Endothelial cell of umbilical vein (primary cell): ENCODE measurements at regions of chr9 and their contacts with region 1.

Region 1: DNA sequence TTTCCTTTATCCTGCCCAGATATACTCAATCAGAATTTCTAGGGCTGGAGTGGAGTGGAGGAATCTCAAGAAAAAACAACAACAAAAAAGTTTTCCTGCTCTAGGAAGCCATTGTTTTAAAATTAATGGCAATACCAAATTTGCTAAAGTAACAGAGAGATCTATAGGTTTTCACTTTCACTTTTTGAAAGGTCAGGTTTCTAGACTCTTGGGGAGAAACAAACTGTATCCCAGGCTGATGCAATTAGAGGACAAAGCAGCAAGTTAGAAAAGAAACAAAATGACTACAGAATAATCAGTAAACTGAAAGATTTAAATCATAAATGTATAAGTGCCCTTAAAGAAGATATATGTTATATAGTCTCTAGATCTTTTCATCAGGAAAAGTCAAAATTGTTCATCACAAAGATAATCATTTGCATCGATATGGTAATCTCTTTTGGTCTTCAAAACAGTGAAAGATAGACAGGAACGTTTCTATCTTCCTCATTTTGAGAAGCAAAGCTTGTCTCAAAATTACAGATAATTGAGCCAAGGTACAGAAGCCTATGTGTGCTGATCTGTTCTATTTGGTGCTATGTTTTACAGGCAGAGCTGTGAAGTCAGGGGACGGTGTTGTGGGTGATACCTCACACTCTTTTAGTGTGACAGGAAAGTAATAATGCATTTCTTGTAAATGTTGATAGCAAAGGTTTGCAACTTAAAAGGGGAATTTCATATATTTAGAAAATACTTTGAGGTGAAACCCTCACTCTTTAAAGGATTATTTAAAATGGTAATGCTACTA is 1746.6 kb upstream of the C9orf72 start:
- DNase-seq: no peak
- H3K4me3 ChIP-seq: no peak overlapping the region
- H3K27ac ChIP-seq: no peak overlapping the region
- H3K4me1 ChIP-seq: no peaks in the 10 kb centered on the region
- H3K27me3 ChIP-seq: no peaks in the 10 kb centered on the region
- CTCF ChIP-seq: no peak
- POLR2A ChIP-seq: no peak

Region 2: GRCh38 chr9:28503573-28503972 is 816.3 kb before region 1 on chr9:
- CTCF ChIA-PET with region 1: no interaction called
- POLR2A ChIA-PET with region 1: no interaction called
- dilution Hi-C with region 1: no loop called
- intact Hi-C with region 1: loop called (anchors 10 kb)
- DNase-seq: no peak
- H3K4me3 ChIP-seq: no peak overlapping the region
- H3K27ac ChIP-seq: no peak overlapping the region
- H3K4me1 ChIP-seq: no peaks in the 10 kb centered on the region
- H3K27me3 ChIP-seq: no peaks in the 10 kb centered on the region
- CTCF ChIP-seq: no peak
- POLR2A ChIP-seq: no peak

Region 3: GRCh38 chr9:28967226-28967625 is 352.7 kb before region 1 on chr9:
- CTCF ChIA-PET with region 1: no interaction called
- POLR2A ChIA-PET with region 1: no interaction called
- dilution Hi-C with region 1: no loop called
- intact Hi-C with region 1: no loop called
- DNase-seq: no peak
- H3K4me3 ChIP-seq: no peak overlapping the region
- H3K27ac ChIP-seq: no peak overlapping the region
- H3K4me1 ChIP-seq: no peaks in the 10 kb centered on the region
- H3K27me3 ChIP-seq: no peaks in the 10 kb centered on the region
- CTCF ChIP-seq: no peak
- POLR2A ChIP-seq: no peak

Region 4: DNA sequence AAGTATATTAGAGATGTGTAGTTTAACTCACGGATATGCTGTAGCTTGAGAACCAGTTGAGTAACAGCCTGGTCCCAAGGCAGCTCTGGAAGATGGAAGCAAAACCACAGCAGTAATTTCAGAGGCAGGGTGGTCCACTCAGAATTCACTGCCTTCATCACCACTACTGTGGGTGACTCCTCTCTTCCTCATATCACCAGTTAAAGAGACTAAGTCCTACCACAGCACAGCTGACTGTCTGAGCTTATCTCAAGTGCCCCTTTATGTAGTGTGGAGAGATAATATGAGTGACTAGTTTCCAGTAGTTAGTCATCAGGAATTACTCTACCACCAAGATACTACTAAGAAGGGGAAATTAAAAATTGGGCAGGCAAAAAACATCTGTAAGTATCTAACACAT is 175.4 kb before region 1 on chr9:
- CTCF ChIA-PET with region 1: no interaction called
- POLR2A ChIA-PET with region 1: no interaction called
- dilution Hi-C with region 1: no loop called
- intact Hi-C with region 1: no loop called
- DNase-seq: no peak
- H3K4me3 ChIP-seq: no peak overlapping the region
- H3K27ac ChIP-seq: no peak overlapping the region
- H3K4me1 ChIP-seq: no peaks in the 10 kb centered on the region
- H3K27me3 ChIP-seq: no peaks in the 10 kb centered on the region
- CTCF ChIP-seq: no peak
- POLR2A ChIP-seq: no peak

Region 5: GRCh38 chr9:29208670-29209069 is 111.2 kb before region 1 on chr9:
- CTCF ChIA-PET with region 1: no interaction called
- POLR2A ChIA-PET with region 1: no interaction called
- dilution Hi-C with region 1: no loop called
- intact Hi-C with region 1: no loop called
- DNase-seq: no peak
- H3K4me3 ChIP-seq: no peak overlapping the region
- H3K27ac ChIP-seq: no peak overlapping the region
- H3K4me1 ChIP-seq: no peaks in the 10 kb centered on the region
- H3K27me3 ChIP-seq: peaks cover 14% of the 10 kb centered on the region in 2 experiments
- CTCF ChIP-seq: no peak
- POLR2A ChIP-seq: no peak